WTC11 (cell line): ENCODE measurements at regions of chr7 and their contacts with region 1.

Region 1: GRCh38 chr7:2621061-2621828 is 10.5 kb upstream of the TTYH3 start:
- DNase-seq: peak; percentile 62
- ATAC-seq: peak; percentile 34
- H3K4me3 Mint-ChIP-seq: no peak overlapping the region
- H3K27ac Mint-ChIP-seq: peak overlapping the region; percentile 89; the same call in 1 of the 2 replicates
- H3K4me1 Mint-ChIP-seq: peaks cover 35% of the 10 kb centered on the region
- H3K27me3 Mint-ChIP-seq: no peaks in the 10 kb centered on the region; the same call in 1 of the 2 replicates
- CTCF ChIP-seq: no peak

Region 2: DNA sequence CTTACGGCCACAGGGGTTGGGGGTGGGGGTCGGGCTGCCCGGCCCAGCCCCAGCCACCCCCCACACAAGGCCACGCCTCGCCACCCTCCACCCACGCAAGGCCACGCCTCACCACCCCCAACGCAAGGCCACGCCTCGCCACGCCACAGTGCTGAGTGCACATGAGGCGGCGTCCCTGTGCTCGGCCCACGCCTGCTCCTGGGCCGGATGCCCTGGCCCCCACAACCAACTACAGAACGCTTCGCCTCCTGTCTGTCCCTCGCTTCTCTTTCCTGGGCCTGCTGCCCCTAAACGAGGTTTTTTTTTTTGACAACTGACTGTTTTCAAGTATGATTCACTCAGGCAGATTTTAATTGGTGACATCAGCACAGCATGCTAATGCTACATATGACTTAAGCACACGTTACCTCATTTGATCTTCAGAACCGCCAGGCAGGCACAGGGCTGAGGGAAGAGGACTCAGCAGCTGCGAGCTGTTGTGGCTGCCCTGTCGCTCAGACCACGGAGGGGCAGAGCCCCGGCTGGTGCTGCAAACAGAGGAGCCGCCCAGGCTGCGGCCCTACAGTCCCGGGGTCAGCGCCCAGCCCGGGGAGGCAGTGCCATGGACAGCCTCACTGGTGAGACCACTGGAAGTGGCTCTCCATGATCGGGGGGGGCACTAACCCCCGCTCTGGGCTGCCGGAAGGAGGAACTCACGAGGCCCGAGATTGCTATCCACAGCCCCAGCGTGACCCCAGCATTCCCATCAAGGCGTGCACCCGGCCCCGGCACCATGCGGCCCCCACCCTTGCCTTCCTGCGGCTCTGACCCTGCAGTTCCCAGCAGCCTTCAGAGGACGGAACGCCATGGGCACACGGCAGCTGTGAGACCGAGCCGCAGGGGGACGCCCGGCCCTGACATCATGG is 601.4 kb before region 1 on chr7:
- CTCF ChIA-PET with region 1: no interaction called
- POLR2A ChIA-PET with region 1: no interaction called
- DNase-seq: no peak
- ATAC-seq: no peak
- H3K4me3 Mint-ChIP-seq: no peak overlapping the region
- H3K27ac Mint-ChIP-seq: peak overlapping the region; percentile 63; the same call in 1 of the 2 replicates
- H3K4me1 Mint-ChIP-seq: peaks cover 4% of the 10 kb centered on the region
- H3K27me3 Mint-ChIP-seq: no peaks in the 10 kb centered on the region
- CTCF ChIP-seq: no peak

Region 3: DNA sequence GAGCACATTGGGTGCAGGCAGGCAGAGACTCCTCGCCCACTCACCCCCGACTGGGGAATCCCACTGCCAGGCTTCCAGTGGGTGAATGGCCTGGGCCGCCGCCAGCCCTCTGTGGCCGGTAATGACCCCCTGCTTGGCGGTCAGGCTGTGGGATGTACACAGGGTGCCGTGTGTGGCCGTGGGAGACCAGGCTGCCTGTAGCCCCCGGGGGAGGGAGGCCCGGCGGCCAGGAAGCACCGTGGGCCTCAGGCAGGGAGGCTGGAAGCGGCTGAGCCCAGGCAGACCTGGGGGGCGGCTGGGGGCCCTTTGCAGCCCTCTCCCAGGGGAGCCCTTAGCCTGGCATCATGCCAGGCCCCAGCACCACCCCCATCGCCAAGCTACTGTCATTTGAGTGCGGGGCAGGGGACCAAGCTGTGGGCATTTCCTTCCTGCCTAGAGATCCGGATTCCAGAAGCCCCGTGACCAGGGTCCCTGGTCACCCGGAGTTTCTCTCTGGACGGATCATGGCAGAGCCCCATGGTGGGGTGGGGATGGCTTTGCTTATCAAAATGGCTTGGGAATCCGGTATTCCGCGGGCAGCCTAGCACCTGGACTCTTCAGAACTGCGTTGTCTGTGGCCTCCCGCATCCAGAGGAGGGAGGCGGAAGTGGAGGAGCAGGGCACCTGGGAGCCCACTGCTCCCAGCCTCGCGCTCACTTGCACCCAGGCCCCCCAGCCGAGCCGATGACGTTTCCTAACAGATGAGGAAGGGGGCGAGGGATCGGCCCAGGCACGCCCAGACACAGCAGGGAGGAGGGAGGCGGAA is 11.7 kb after region 1 on chr7:
- CTCF ChIA-PET with region 1: interaction called, 17 read pairs
- POLR2A ChIA-PET with region 1: interaction called, 10 read pairs
- DNase-seq: no peak
- ATAC-seq: no peak
- H3K4me3 Mint-ChIP-seq: peak overlapping the region; percentile 86
- H3K27ac Mint-ChIP-seq: peak overlapping the region; percentile 76
- H3K4me1 Mint-ChIP-seq: peaks cover 23% of the 10 kb centered on the region
- H3K27me3 Mint-ChIP-seq: peaks cover 2% of the 10 kb centered on the region; the same call in 1 of the 2 replicates
- CTCF ChIP-seq: no peak

Region 4: DNA sequence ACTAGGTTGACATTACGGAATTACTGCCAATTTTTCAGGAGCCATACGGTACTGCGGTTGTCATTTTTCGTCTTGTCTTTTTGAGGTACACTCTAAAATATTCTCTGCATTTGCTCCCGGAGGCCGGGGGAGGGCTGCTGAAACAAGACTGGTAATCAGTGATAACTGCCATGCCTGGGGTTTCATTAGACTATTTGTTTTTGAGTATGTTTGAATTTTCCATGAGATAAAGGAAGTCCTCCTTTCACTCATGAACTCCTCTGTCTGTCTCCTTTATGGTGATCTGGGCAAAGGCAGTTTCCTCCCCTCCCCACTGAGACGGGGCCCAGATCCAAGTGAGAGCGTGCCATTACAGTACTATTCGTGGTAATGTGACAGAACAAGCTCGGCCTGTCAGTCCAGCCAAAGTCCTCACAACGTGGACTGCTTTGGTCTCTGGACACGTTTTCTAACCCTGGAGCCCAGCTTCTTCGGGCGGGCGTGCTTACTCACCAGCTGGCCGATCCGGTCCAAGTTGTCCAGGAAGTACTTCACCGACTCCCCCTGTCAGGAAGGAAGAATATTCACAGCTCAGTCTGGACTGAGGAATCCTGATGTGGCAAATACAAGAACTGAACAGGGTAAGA is 111.8 kb after region 1 on chr7:
- CTCF ChIA-PET with region 1: no interaction called
- POLR2A ChIA-PET with region 1: no interaction called
- DNase-seq: peak; percentile 9
- ATAC-seq: no peak
- H3K4me3 Mint-ChIP-seq: no peak overlapping the region
- H3K27ac Mint-ChIP-seq: peak overlapping the region; percentile 91
- H3K4me1 Mint-ChIP-seq: peaks cover 39% of the 10 kb centered on the region
- H3K27me3 Mint-ChIP-seq: no peaks in the 10 kb centered on the region
- CTCF ChIP-seq: no peak